Posterior cingulate gyrus (tissue), 11 donors: ENCODE measurements at regions of chr12 and their contacts with region 1.

Region 1: GRCh38 chr12:12376646-12377448 is 20.0 kb downstream of the BORCS5 start:
- DNase-seq: peak in 1 of 10 donors; percentile 74

Region 2: DNA sequence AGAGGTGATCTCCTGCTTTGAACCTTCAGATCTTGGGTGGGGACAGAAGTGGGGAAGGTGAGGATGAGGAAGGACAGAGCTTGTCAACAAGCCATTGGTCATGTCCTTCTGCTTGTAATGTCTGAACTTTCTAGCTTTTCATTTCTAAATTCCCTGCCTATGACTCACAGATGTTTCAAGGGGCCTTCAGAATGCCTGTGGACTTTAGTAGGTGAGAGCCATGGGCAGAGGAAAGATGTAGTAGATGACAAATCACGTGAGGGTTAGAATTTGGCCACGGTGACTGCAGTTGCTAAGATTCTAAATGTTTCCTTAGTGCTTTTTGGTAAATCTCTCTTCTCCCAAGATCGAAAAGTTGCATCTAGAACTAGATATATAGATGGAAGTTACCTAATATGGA is 216.1 kb after region 1 on chr12:
- intact Hi-C with region 1: no loop called
- DNase-seq: no peak

Region 3: DNA sequence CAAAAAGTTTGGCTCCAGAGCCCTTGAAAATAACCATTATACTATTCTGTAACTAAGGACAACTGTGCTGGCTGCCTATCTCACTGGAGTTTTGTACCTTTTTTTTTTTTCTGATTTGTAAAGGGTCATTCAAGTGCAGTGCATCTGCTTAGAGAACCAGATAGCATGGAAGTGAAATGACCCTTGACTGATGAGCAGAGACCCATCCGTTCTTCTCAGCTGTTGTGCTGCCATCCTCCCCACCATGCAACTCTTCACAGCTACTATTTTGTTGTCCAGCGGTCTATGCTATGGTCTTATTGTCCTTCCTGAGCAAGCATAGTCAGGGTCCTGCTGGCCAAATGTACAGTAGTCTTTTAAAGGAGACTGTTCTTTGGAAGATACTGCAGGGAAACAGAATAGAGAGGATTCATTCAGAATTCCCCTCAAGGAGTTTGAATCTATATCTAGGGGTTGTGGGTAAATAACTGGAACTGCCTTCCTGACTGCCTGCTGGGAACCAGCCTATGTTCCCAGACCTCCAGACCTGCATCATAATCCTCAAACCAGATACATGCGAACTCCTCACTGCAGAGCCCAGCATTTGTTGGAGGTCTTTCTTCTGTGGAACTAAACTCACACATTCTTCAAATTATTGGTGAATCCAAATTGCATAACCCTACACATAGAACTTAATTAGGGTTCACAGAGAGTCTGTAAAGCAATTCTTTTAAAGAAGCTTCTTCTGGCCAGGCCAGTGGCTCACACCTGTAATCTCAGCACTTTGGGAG is 278.0 kb after region 1 on chr12:
- intact Hi-C with region 1: loop called (anchors 5 kb)
- DNase-seq: no peak

Region 4: DNA sequence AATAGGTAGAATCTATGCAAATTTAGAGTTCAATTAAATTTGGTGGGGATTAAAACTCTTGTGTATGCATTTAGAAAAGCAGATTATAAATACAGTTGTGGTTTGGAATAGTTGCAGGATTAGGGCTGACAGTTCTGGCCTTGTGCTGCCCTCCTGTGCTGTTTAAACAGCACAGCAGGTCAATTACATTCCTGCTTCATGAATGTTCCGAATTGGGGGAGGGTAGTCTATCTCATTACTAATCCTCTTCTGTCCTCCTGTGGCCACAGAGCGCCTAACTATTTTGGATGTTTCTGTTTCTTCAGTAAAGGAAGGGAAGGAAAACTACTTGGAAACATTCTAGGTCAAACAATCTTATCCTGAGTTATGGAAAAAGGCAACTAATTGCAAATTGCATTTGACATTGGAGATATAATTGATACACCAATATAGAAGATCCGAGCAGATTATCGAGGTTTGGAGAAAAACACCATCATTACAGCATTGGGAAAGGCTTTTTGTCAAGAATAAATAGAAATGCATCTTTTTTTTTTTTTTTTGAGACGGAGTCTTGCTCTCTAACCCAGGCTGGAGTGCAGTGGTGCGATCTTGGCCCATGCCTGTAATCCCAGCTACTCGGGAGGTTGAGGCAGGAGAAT is 327.9 kb after region 1 on chr12:
- intact Hi-C with region 1: loop called (anchors 2 kb)
- DNase-seq: peak in 5 of 10 donors; percentile 40 to 90 (median 53)